Activated CD4-positive, alpha-beta memory T cell treated with anti-CD3 and anti-CD28 coated beads for 36 hours (primary cell): ENCODE measurements at regions of chr6 and their contacts with region 1.

Region 1: DNA sequence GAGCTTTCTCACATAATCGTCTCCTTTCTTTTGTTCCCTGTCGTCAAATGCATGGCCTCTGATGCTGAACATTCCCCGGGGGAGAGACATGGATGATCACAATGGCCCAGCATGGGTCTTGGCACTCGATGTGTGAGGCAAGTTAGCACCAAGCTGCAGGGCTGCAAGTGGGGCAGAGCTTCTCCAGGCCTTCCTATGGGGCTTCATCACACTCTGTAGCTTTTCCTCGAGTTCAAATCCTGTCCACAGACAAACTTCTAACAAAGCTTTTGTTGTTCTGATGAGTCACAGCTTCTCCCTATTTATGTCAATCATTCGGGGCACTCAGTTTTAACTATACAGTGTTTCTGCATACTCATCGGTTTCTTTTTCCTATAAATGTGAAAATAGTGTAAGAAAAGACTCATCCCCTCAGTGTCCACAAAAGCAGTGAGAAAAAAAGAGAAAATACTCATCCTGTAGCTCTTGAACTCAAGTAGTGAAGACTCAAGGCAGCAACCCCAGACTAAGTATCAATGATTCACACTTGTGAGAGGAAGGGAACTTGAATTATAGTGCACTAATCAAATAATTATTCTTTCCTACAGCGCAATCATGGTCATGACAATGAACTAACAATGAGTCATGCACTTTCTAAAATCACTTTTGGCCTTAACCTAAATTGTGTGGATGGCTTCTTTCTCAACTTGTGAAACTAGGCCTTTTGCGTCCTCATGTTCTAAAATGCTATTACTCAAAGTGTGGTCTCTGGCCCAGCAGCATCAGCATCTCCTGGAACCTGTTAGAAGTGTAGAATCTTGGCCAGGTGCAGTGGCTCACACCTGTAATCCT is 68.4 kb upstream of the NOX3 start:
- DNase-seq: peak; percentile 55
- H3K4me3 Mint-ChIP-seq: no peak overlapping the region
- H3K27ac Mint-ChIP-seq: peak overlapping the region; percentile 90
- H3K4me1 Mint-ChIP-seq: peaks cover 34% of the 10 kb centered on the region
- H3K27me3 Mint-ChIP-seq: peaks cover 1% of the 10 kb centered on the region

Region 2: DNA sequence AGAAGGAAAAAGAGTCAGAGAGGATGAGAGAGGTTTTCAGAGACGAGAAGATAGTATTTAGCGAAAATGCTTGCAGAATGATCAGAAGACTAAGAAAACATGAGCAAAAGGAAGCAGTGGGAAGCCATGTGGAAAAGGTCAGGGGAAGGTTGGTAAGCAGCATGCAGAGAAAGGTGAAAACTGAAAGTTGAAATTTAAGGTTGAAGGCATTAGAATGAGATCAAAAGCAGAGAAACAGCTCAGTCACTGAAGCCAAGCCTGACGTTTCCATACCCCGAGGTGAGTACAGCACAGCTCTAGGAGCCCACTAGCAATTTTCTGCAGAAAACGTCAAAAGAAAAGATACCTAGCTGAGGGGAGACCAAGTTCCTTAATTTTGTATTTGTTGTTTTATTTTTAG is 190.6 kb before region 1 on chr6:
- CTCF ChIA-PET with region 1: interaction called, 24 read pairs
- POLR2A ChIA-PET with region 1: no interaction called
- intact Hi-C with region 1: loop called (anchors 1 kb)
- DNase-seq: peak; percentile 39
- H3K4me3 Mint-ChIP-seq: peak overlapping the region; percentile 33
- H3K27ac Mint-ChIP-seq: peak overlapping the region; percentile 76
- H3K4me1 Mint-ChIP-seq: peaks cover 28% of the 10 kb centered on the region
- H3K27me3 Mint-ChIP-seq: no peaks in the 10 kb centered on the region

Region 3: DNA sequence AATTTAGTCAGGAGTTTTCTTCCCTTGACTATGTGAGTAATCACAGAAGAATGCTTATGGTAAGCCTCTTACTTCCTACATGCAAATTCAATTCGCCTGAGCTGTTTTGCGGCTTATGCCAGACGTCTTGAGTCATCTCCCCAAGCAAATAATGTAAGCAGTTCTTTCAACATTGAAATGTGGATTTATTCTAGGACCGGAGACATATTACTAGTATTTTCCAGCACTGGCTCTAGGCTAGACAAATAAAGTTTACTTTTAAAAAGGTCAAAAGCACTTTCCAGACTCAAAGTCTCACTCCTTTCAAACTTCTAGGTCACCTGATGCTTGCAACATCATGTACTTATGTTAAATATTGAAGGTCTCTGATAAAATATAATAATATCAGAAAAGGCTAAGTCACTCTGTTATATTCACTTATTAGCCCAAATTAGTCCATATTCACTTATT is 30.3 kb before region 1 on chr6:
- CTCF ChIA-PET with region 1: interaction called, 5 read pairs
- POLR2A ChIA-PET with region 1: no interaction called
- intact Hi-C with region 1: loop called (anchors 1 kb)
- DNase-seq: peak; percentile 62
- H3K4me3 Mint-ChIP-seq: no peak overlapping the region
- H3K27ac Mint-ChIP-seq: peak overlapping the region; percentile 34
- H3K4me1 Mint-ChIP-seq: peaks cover 33% of the 10 kb centered on the region
- H3K27me3 Mint-ChIP-seq: no peaks in the 10 kb centered on the region

Region 4: GRCh38 chr6:155628306-155628705 is 104.3 kb after region 1 on chr6:
- CTCF ChIA-PET with region 1: no interaction called
- POLR2A ChIA-PET with region 1: no interaction called
- intact Hi-C with region 1: loop called (anchors 1 kb)
- DNase-seq: peak; percentile 85
- H3K4me3 Mint-ChIP-seq: peak overlapping the region; percentile 8
- H3K27ac Mint-ChIP-seq: peak overlapping the region; percentile 95
- H3K4me1 Mint-ChIP-seq: peaks cover 18% of the 10 kb centered on the region
- H3K27me3 Mint-ChIP-seq: peaks cover 1% of the 10 kb centered on the region

Region 5: DNA sequence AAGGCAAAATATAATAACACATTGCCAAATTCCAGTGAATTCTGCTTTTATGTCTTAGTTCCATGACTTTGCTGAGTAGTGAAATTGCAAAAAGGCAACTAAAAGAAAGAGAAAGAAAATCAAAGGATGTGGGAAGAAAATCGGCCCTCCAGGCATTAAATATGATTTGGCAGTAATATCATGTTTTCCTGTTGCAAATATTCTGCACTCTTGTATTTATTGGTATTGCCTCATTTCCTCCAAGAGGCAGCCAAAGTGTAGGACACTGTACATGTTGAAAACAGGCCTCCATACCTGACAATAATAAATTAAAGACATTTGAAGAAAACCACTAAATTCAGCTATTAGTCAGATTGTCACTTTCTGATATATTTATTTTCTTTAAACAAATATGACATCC is 391.6 kb after region 1 on chr6:
- CTCF ChIA-PET with region 1: no interaction called
- POLR2A ChIA-PET with region 1: no interaction called
- intact Hi-C with region 1: no loop called
- DNase-seq: no peak
- H3K4me3 Mint-ChIP-seq: no peak overlapping the region
- H3K27ac Mint-ChIP-seq: no peak overlapping the region
- H3K4me1 Mint-ChIP-seq: no peaks in the 10 kb centered on the region
- H3K27me3 Mint-ChIP-seq: no peaks in the 10 kb centered on the region